Activated CD4-positive, alpha-beta T cell treated with anti-CD3 and anti-CD28 coated beads for 36 hours (primary cell): ENCODE measurements at regions of chr9 and their contacts with region 1.

Region 1: DNA sequence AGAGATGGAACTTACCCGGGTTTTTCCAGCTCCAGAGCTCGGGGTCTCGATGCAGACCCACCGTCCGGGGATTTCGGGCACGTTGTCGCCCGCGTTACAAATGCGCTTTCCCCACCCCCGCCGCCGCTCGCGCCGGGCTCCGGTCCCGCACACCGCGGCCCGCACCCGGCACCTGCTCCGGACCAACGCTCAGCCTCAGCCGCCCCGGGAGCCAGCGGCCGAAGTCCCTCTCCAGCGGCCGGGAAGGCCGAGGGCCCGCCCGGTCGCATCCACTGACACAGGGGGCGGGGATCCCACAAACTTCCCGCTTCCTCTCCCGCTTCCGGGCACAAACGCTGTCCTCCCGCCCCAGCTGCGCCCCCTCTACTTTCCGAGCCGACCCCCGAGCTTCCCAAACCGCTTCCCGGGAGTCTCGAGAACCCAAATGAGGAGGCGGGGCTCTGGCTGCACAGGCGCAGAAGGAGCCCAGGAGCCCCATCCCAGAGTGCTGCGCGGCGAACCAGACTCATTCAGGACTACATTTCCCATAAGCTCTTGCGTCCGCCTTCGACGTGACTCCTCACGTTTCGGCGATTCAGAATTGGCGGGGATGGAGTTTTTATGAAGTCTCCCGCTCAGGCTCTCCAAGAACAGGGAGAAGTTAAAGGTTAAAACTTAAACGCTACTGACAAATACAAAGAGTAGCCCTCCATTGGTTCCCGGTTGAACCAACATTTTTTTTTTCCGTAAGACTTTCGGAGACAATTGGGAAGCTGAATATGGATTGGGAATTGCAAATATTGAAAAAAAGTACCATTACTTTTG is at the start of gene ZNF782:
- DNase-seq: peak; percentile 92
- ATAC-seq: peak; percentile 92
- H3K4me3 Mint-ChIP-seq: peak within 1 kb of the TSS; percentile 96
- H3K27ac Mint-ChIP-seq: peak within 1 kb of the TSS; percentile 100
- H3K4me1 Mint-ChIP-seq: peaks cover 49% of the 10 kb centered on the region
- H3K27me3 Mint-ChIP-seq: peaks cover 11% of the 10 kb centered on the region
- total RNA-seq, gene ZNF782: 3.8 to 4.8 TPM

Region 2: DNA sequence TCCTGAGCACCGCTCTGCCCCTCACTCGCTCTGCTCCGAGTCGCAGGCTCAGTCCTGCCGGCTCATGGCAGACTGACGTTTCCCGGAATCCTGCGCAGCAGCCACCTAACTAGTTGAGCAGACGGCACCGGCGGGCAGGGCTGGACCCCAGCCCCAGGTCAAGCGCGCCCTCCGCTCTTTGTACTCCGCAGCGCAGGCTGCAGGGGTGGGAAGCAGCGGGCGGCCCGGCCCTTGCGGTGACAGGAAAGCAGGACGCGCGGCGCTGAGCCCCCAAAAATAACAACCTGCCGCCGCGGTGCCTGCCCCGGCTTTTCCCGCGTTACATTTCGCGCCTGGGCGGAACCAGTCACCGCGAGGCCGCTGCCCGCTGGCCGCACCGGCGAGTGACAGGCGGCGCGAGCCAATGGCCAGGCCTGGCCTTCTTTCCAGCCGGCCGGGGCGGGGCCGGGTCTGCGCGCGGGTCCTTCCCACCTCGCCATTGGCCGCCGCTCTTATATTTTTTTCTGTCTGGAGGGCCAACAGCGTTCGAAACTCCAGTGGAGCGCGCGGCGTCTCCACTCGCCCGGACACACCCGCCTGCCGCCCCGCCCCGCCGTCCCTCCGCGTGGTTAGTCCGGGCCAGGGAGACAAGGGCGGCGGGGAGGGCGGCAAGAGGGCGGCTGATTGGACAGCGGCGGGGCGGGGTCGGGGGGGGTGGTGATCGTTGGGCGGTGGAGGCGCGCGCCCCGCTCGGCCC is 436.0 kb before region 1 on chr9 and contains the start of gene ZNF367:
- CTCF ChIA-PET with region 1: no interaction called
- POLR2A ChIA-PET with region 1: no interaction called
- intact Hi-C with region 1: loop called in 1 of 2 experiments (anchors 1 kb)
- DNase-seq: peak; percentile 97
- ATAC-seq: peak; percentile 81
- H3K4me3 Mint-ChIP-seq: peak within 1 kb of the TSS; percentile 93
- H3K27ac Mint-ChIP-seq: peak within 1 kb of the TSS; percentile 90
- H3K4me1 Mint-ChIP-seq: peaks cover 38% of the 10 kb centered on the region
- H3K27me3 Mint-ChIP-seq: no peaks in the 10 kb centered on the region
- total RNA-seq, gene ZNF367: 22.0 to 24.2 TPM

Region 3: DNA sequence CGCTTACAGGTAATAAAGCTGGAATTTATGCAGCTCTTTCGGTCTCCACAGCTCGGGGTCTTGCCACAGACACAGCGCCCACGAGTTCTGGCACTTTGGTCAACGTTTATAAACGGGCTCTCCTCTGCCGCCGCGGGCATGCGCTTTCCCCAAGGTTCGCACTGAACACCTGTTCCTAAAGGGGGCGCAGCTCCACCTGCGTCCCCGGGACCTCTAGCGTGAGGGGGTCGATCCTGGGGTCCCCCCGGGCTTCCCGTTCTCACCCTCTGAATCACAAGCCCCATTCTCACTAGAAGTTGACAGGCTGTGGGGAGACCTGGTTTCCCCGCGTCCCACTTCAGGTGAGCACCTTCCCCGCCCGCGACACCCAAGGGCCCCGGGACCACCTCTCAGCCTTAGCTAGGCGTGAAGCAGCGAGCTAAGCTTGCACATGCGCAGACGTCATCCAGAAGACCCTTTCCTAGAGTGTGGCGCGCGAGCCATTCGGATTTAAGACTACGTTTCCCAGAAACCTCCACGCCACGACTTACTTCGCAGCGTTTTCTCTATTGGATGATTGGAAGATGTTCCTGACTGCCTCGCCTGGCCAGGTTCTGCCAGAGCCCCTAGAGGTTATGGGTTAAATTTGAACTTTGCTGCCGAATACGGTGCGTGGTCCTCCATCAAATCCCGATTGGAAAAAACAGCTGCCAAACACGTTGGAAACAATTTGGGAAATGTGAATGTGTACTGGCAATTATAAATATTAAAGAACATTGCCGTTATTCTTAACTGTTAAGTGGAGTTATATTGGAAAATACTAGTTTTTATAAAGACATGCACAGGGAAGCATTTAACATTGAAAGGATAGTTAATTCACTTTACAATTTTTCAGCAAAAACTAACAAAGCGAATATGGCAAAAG is 21.4 kb after region 1 on chr9:
- CTCF ChIA-PET with region 1: interaction called, 69 read pairs
- POLR2A ChIA-PET with region 1: no interaction called
- intact Hi-C with region 1: loop called (anchors 1 to 2 kb)
- DNase-seq: peak; percentile 73
- ATAC-seq: peak; percentile 67
- H3K4me3 Mint-ChIP-seq: peak overlapping the region; percentile 76
- H3K27ac Mint-ChIP-seq: peak overlapping the region; percentile 87
- H3K4me1 Mint-ChIP-seq: peaks cover 26% of the 10 kb centered on the region
- H3K27me3 Mint-ChIP-seq: peaks cover 44% of the 10 kb centered on the region

Region 4: GRCh38 chr9:97124256-97124655 is 270.0 kb after region 1 on chr9:
- CTCF ChIA-PET with region 1: no interaction called
- POLR2A ChIA-PET with region 1: no interaction called
- intact Hi-C with region 1: no loop called
- DNase-seq: no peak
- ATAC-seq: no peak
- H3K4me3 Mint-ChIP-seq: no peak overlapping the region
- H3K27ac Mint-ChIP-seq: no peak overlapping the region
- H3K4me1 Mint-ChIP-seq: no peaks in the 10 kb centered on the region
- H3K27me3 Mint-ChIP-seq: no peaks in the 10 kb centered on the region

Region 5: GRCh38 chr9:97220894-97221477 is 366.7 kb after region 1 on chr9:
- CTCF ChIA-PET with region 1: no interaction called
- POLR2A ChIA-PET with region 1: no interaction called
- intact Hi-C with region 1: loop called (anchors 5 kb)
- DNase-seq: no peak
- ATAC-seq: peak; percentile 37
- H3K4me3 Mint-ChIP-seq: peak overlapping the region; percentile 66
- H3K27ac Mint-ChIP-seq: peak overlapping the region; percentile 6
- H3K4me1 Mint-ChIP-seq: peaks cover 5% of the 10 kb centered on the region
- H3K27me3 Mint-ChIP-seq: peaks cover 35% of the 10 kb centered on the region

Region 6: DNA sequence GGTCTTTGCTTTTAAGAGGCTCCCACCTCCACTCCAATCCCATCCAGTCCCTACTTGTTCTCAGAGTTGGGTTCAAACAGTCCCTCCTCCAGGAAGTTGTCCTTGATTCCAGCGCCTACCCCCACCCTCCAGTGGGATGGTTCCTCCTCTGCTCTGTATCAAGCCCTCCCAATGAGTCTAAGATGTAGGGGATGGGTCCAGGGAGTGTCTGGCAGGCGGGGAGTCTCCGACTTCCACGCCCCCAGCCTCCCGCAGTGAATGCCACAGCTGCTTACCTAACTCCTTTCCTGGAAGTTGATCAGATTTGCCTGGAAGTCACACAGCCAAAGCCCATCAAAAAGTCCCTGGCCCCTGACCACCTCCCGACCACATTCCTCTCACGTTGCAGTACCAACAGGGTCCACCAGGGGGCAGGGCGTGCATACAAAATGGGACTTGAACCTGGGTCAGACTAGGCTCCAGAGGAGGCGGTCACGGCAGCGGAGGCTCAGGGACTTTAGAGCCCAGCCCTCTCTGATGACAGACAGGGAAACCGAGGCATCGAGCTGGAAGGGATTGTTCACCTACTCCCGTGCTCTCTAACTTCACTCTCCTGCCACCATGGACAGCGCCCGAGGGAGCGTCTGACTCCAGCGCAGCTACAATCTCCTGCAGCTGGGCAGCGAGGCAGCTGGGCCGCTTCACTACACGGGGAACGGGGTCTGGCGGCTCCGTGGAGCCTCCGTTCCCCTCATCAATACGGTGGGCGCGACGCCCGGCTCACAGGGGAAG is 532.6 kb after region 1 on chr9:
- CTCF ChIA-PET with region 1: interaction called, 9 read pairs
- POLR2A ChIA-PET with region 1: no interaction called
- intact Hi-C with region 1: loop called in 1 of 2 experiments (anchors 5 kb)
- DNase-seq: peak; percentile 86
- ATAC-seq: peak; percentile 55
- H3K4me3 Mint-ChIP-seq: no peak overlapping the region
- H3K27ac Mint-ChIP-seq: no peak overlapping the region
- H3K4me1 Mint-ChIP-seq: peaks cover 14% of the 10 kb centered on the region
- H3K27me3 Mint-ChIP-seq: peaks cover 16% of the 10 kb centered on the region

Region 7: DNA sequence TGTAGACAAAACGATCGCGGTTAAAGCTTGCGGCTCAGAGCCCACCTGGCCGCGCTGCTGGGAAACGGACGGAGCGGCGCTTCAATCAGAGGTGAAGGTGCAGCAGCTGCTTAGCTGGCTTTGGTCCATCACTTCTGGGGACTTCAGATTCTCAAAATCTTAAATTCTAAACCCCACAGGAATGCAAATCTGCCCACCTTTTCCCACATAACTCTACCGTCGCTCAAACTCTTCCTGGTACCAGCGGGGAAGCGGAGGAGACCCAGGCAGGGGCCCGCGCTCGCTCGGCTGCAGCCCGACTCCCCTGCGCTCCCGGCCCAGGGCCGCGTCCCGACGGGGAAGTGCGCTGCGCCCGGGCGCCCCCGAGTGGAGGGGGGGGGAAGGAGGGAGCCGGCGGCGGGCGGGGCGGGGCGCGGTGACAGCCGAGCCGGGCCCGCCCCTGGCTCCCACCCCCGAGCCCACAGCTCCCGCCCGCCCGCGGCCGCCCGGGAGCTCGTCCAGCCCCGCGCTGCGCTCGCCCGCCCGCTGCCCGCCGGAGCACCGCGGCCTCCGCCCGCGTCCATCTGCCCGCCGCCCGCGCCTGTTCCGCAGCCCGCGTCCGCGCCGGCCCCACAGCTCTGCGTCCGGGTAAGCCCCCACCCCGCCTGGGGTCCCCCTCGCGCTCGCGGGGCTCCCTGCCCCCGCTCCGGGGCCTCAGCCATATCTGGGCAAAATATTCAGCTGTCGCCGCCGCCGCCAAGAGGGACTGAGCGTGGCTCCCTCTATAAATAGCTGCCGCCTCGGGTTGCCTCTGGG is 647.1 kb after region 1 on chr9 and contains the start of gene TMOD1:
- CTCF ChIA-PET with region 1: no interaction called
- POLR2A ChIA-PET with region 1: no interaction called
- intact Hi-C with region 1: loop called in 1 of 2 experiments (anchors 10 kb)
- DNase-seq: peak; percentile 66
- ATAC-seq: peak; percentile 67
- H3K4me3 Mint-ChIP-seq: peak within 1 kb of the TSS; percentile 64
- H3K27ac Mint-ChIP-seq: no peak within 1 kb of the TSS
- H3K4me1 Mint-ChIP-seq: peaks cover 15% of the 10 kb centered on the region
- H3K27me3 Mint-ChIP-seq: peaks cover 45% of the 10 kb centered on the region
- total RNA-seq, gene TMOD1: 1.3 to 1.5 TPM

Region 8: GRCh38 chr9:97632985-97633858 is 778.9 kb after region 1 on chr9 and contains the starts of genes NCBP1 and TSTD2:
- CTCF ChIA-PET with region 1: no interaction called
- POLR2A ChIA-PET with region 1: no interaction called
- intact Hi-C with region 1: loop called in 1 of 2 experiments (anchors 2 kb)
- DNase-seq: peak; percentile 98
- ATAC-seq: peak; percentile 91
- H3K4me3 Mint-ChIP-seq: peak within 1 kb of the TSS; percentile 92
- H3K27ac Mint-ChIP-seq: peak within 1 kb of the TSS; percentile 99
- H3K4me1 Mint-ChIP-seq: peaks cover 48% of the 10 kb centered on the region
- H3K27me3 Mint-ChIP-seq: no peaks in the 10 kb centered on the region
- total RNA-seq, gene NCBP1: 42.2 to 43.0 TPM
- total RNA-seq, gene TSTD2: 12.7 to 15.0 TPM